ENCODE measurements at regions of chr22 and their contacts with region 1.

Region 1: DNA sequence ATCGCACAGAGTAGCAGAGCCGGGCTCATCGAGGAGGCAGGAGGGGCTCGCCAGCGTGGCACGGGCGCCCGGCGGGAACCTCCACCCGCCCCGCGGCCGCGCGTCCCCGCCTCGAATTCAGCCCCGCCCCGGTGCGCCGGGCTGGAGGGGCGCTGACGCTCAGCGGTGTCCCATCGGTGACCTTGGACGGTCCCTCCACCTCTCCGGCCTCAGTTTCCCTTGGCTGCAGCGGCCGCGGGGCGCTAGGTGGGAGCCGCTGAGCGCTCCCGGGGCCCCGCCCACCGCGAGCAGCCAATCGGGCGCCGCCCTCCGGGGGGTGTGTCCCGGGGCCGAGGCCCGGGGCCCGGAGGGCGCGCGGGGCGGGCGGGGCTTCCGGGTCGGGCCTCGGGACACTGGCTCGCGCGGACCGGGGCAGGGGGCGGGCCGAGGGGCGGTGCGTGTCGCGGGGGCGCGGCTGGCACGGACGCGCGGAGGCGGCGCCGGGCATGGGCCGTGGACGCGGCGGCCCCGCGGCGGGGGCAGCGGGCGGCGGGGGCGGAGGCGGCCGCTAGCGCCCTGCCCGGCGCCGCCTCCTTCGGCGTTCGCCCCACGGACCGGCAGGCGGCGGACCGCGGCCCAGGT is at the start of gene PPARA:
- DNase-seq: peak; percentile 90 to 95
- ATAC-seq: peak; percentile 78 to 92 (median 89)
- H3K4me3 ChIP-seq: peak within 1 kb of the TSS; percentile 72 to 99 (median 96)
- H3K27ac ChIP-seq: peak within 1 kb of the TSS; percentile 92 to 99 (median 96)
- H3K4me1 ChIP-seq: peaks cover 16 to 69% (median 36%) of the 10 kb centered on the region in 9 donors
- H3K27me3 ChIP-seq: peaks cover 0 to 13% (median 0%) of the 10 kb centered on the region in 7 donors
- CTCF ChIP-seq: no peak
- total RNA-seq, gene PPARA: 69.0 to 89.5 (median 81.1) TPM

Region 2: DNA sequence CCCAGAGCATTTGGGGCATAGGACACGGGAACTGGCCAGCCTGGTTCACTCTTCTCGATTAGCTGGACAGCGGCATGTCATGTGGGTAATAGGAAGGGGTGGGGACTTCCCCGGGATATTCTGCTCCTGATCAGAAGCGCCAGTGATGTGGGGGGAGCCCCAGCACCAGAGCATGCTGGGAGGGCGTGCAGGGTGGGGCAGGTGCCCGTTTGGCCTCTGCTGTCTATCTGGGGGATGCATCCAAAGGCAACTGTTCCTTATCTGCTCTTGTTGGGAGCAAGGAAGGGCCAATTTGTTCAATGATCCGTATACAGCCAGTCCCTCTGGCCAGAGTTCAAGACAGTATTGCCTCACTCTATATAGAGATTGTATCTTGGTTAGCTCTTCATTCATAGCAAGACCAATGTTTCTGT is 43.8 kb after region 1 on chr22:
- intact Hi-C with region 1: loop called in 2 of 10 experiments (anchors 5 kb)
- DNase-seq: no peak
- ATAC-seq: peak in 2 of 8 donors; percentile 27 to 32
- H3K4me3 ChIP-seq: no peak overlapping the region
- H3K27ac ChIP-seq: no peak overlapping the region
- H3K4me1 ChIP-seq: peaks cover 0 to 35% (median 31%) of the 10 kb centered on the region in 9 donors
- H3K27me3 ChIP-seq: no peaks in the 10 kb centered on the region
- CTCF ChIP-seq: no peak

Region 3: DNA sequence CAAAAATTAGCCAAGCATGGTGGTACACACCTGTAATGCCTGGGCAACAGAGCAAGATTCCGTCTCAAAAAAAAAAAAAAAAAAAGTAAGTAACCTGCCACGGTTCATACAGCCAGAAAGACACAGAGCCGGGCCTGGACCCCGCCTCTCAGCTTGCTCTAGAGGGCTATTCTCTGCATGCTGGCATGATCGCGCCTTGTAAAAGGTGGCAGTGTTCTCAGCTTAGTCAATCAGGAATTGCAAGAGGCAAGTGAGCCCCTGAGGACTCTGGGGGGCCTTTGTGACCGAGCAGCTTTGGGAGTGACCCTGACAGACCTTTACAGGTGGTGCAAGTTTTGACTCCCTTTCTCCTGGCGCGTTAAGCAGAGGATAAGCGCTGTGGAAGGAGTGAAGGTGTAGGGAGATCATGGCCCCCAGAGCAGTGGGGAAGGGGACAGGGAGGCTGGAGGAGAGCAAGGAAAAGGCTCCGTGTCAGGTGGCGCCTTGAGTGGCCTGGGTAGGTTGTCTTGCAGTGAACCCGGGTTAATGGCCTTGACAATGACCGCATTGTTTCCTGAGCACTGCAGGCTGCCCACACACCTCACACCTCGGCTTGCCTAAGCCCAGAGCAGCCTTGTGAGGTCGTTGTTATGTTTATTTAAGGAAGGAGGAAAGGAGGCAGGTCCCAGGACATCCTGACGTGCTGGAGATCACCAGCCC is 51.1 kb after region 1 on chr22:
- intact Hi-C with region 1: loop called in 1 of 10 experiments (anchors 10 kb)
- DNase-seq: no peak
- ATAC-seq: peak in 7 of 8 donors; percentile 29 to 66 (median 42)
- H3K4me3 ChIP-seq: no peak overlapping the region
- H3K27ac ChIP-seq: peak overlapping the region in 2 of 10 donors; percentile 5 to 56
- H3K4me1 ChIP-seq: peaks cover 2 to 23% (median 19%) of the 10 kb centered on the region in 9 donors
- H3K27me3 ChIP-seq: no peaks in the 10 kb centered on the region
- CTCF ChIP-seq: no peak

Region 4: GRCh38 chr22:46250035-46250782 is 100.1 kb after region 1 on chr22 and contains the start of gene CDPF1:
- intact Hi-C with region 1: loop called in 5 of 10 experiments (anchors 5 to 10 kb)
- DNase-seq: peak; percentile 93 to 94
- ATAC-seq: peak; percentile 92 to 97 (median 94)
- H3K4me3 ChIP-seq: peak within 1 kb of the TSS; percentile 48 to 93 (median 81)
- H3K27ac ChIP-seq: peak within 1 kb of the TSS; percentile 84 to 96 (median 94)
- H3K4me1 ChIP-seq: peaks cover 13 to 58% (median 43%) of the 10 kb centered on the region in 9 donors
- H3K27me3 ChIP-seq: no peaks in the 10 kb centered on the region
- CTCF ChIP-seq: no peak
- total RNA-seq, gene CDPF1: 6.3 to 10.4 (median 7.5) TPM

Region 5: DNA sequence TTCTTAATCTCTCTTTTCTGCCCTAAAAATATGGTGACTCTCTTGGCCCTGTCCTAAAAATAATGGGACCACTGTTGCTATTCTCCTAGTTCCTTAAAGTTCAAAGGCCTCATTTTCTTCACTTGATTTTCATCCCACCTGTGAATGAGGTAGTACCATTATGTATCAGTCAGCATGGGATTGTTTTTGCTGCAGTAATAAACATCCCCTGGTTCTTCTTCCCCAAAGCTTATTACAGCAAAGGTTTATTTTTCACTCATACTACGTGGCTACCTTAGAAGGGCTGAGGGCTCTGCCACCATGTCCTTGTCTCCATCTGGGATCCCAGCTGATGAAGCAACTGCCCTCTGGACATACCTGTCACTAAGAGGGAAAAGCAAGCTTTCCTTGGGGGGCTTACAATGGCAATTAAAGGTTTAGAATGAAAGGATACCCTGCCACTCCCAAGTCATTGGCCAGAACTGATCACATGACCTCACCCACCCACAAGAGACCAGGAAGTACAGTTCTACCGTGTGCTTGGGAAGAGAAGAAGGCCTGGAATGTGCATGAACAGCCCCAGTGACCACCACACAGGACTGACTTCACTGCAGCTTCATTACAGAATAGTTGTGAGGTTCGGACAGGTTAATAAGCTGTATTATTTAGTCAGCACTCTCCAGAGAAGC is 125.4 kb after region 1 on chr22:
- intact Hi-C with region 1: no loop called
- DNase-seq: no peak
- ATAC-seq: no peak
- H3K4me3 ChIP-seq: no peak overlapping the region
- H3K27ac ChIP-seq: no peak overlapping the region
- H3K4me1 ChIP-seq: peaks cover 4 to 24% (median 15%) of the 10 kb centered on the region in 9 donors
- H3K27me3 ChIP-seq: no peaks in the 10 kb centered on the region
- CTCF ChIP-seq: no peak

Region 6: GRCh38 chr22:46296257-46297150 is 146.4 kb after region 1 on chr22 and contains the start of gene GTSE1:
- intact Hi-C with region 1: loop called in 1 of 10 experiments (anchors 5 kb)
- DNase-seq: peak; percentile 97 to 99
- ATAC-seq: peak; percentile 97 to 99 (median 98)
- H3K4me3 ChIP-seq: peak within 1 kb of the TSS; percentile 43 to 76 (median 63)
- H3K27ac ChIP-seq: peak within 1 kb of the TSS; percentile 89 to 97 (median 91)
- H3K4me1 ChIP-seq: peaks cover 11 to 45% (median 18%) of the 10 kb centered on the region in 9 donors
- H3K27me3 ChIP-seq: no peaks in the 10 kb centered on the region
- CTCF ChIP-seq: peak in 6 of 9 donors; percentile 26 to 62 (median 49)
- total RNA-seq, gene GTSE1: 0.17 to 4.7 (median 0.37) TPM